Right cardiac atrium (tissue), 5 donors: ENCODE measurements at regions of chr10 and their contacts with region 1.

Region 1: GRCh38 chr10:59465088-59465487 is 102.7 kb upstream of the FAM13C start:
- DNase-seq: no peak
- ATAC-seq: no peak
- H3K4me3 ChIP-seq: no peak overlapping the region
- H3K27ac ChIP-seq: no peak overlapping the region
- H3K4me1 ChIP-seq: no peaks in the 10 kb centered on the region
- H3K27me3 ChIP-seq: no peaks in the 10 kb centered on the region

Region 2: DNA sequence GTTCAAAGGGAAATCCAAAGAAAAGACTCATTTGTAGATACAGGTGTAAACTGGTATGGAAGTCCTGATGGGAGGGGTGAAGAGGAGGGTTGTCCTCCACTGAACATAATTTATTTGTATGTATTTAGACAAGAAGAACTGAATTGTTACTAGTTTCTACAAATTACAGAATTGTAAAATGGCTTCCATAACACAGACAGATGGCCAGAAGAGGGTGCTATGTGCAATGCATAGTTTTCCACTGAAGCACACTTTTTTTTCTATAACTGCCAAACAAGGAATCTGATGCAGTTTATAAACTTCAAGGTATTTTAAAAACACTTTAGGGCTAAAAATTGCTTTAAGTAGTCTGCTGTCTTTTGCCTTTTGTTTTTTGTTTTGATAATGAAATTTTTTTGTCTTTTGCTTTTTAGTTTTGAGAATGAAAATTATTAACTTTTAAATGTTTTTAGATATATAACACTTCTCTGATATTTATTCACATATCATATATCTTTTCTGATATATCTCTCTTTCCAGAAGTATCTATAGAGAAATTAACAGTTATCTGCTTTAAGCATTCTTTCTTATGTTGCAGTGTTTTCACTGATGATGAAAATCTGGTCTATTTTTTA is 230.2 kb before region 1 on chr10:
- intact Hi-C with region 1: loop called in 2 of 4 experiments (anchors 10 kb)
- DNase-seq: no peak
- ATAC-seq: no peak
- H3K4me3 ChIP-seq: no peak overlapping the region
- H3K27ac ChIP-seq: no peak overlapping the region
- H3K4me1 ChIP-seq: no peaks in the 10 kb centered on the region
- H3K27me3 ChIP-seq: no peaks in the 10 kb centered on the region

Region 3: DNA sequence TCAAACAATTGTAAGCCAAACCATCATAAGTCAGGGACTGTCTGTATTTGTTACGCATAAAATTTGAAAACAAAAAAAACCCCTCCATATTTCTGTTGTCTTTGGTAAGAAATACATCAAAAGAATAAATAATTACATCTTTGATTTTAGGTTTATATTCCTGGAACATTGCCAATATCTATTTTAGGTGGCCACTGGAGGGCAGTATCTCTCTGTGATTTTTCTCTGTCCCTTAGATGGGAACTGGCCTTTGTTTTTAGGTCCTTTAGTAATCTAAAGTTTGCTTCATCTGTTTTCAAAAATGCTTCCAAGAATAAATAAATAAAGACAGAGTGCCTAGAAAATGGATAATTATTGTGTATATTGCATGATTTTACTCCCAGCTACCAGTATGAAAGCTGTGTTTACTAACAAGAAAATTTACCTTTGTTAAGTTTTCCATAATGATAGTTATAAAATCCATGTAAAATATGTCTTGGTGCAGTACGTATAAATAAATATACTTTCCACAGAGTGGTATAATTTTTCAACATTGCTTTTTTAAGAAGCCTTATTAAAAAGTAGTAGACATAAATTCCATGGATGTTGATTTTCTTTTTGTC is 224.4 kb before region 1 on chr10:
- intact Hi-C with region 1: loop called in 2 of 4 experiments (anchors 10 kb)
- DNase-seq: no peak
- ATAC-seq: no peak
- H3K4me3 ChIP-seq: no peak overlapping the region
- H3K27ac ChIP-seq: no peak overlapping the region
- H3K4me1 ChIP-seq: no peaks in the 10 kb centered on the region
- H3K27me3 ChIP-seq: no peaks in the 10 kb centered on the region

Region 4: DNA sequence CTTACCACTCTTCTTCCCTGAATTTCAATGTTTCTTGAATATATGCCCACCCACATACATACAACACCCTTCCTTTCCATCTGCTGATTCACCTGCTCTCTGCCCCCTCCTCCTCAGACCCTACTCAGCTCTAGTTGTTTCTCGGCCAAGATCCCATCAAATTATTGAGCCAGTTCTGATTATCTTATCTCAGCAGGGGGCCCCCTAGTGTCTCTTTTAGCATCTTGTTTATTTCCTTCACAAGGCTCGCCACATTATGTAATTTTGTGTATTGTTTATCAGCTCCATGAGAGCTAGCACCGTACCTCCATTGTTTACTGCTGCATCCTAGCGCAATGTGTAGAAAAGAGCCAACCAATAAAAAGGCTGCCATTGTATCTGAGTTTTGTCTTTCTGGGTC is 174.6 kb before region 1 on chr10:
- intact Hi-C with region 1: loop called in 1 of 4 experiments (anchors 10 kb)
- DNase-seq: no peak
- ATAC-seq: no peak
- H3K4me3 ChIP-seq: no peak overlapping the region
- H3K27ac ChIP-seq: no peak overlapping the region
- H3K4me1 ChIP-seq: peaks cover 1% of the 10 kb centered on the region
- H3K27me3 ChIP-seq: no peaks in the 10 kb centered on the region

Region 5: DNA sequence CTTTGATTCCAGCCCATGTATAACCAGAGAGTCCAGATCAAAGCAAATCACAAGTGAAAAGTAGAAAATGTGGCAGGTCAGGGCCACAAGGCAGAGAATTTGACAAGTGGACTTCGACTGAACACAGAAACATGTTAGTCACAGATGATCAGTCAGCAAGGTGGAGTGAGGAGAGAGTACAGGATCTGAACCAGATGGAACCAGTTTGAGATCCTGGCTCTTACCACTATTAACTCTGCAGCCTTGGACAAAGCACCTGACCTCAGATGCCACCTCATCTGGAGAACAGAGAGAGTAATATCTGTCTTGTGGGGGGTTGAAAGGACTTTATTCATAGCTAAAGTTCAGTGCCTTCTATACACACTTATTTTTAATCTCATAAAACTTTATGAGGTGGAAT is 283.7 kb after region 1 on chr10:
- intact Hi-C with region 1: no loop called
- DNase-seq: no peak
- ATAC-seq: no peak
- H3K4me3 ChIP-seq: no peak overlapping the region
- H3K27ac ChIP-seq: no peak overlapping the region
- H3K4me1 ChIP-seq: no peaks in the 10 kb centered on the region
- H3K27me3 ChIP-seq: no peaks in the 10 kb centered on the region